ENCODE measurements at regions of chr10 and their contacts with region 1.

Region 1: GRCh38 chr10:73886085-73886529 is 11.8 kb upstream of the CAMK2G start:
- DNase-seq: no peak
- H3K4me3 ChIP-seq: no peak overlapping the region
- H3K27me3 ChIP-seq: no peaks in the 10 kb centered on the region
- CTCF ChIP-seq: peak; percentile 89

Region 2: DNA sequence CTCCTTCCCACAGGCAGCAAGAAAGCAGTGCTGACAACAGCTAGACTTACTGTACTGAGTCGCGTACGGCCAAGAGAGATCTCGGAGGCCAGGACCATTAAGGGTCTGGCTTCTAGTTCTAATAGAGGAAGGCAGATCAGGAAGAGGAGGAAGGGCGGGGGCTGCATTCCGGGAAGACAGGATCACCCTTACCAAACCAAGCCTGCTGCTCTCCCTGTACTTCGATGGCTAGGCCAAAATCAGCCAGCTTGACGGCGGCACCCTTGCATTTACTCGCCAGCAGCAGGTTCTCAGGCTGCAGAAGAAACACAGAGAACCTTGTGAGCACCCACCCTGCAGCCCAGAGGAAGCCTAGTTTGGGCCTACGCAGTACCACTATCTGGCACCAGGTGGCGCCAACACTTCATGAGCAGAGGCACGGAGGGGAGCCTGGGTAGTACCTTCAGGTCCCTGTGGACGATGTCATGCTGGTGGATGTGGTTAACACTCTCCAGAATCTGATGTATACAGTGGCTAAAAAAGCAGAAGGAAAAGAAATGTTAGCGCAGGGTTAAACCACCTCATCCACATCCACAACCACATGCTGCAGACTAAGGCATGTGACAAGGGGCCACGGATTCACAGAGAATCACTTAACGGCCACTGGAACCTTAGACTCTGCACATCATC is 37.2 kb before region 1 on chr10:
- CTCF ChIA-PET with region 1: interaction called, 337 read pairs
- POLR2A ChIA-PET with region 1: interaction called, 3 read pairs
- DNase-seq: no peak
- H3K4me3 ChIP-seq: no peak overlapping the region
- H3K27me3 ChIP-seq: no peaks in the 10 kb centered on the region
- CTCF ChIP-seq: peak; percentile 99

Region 3: DNA sequence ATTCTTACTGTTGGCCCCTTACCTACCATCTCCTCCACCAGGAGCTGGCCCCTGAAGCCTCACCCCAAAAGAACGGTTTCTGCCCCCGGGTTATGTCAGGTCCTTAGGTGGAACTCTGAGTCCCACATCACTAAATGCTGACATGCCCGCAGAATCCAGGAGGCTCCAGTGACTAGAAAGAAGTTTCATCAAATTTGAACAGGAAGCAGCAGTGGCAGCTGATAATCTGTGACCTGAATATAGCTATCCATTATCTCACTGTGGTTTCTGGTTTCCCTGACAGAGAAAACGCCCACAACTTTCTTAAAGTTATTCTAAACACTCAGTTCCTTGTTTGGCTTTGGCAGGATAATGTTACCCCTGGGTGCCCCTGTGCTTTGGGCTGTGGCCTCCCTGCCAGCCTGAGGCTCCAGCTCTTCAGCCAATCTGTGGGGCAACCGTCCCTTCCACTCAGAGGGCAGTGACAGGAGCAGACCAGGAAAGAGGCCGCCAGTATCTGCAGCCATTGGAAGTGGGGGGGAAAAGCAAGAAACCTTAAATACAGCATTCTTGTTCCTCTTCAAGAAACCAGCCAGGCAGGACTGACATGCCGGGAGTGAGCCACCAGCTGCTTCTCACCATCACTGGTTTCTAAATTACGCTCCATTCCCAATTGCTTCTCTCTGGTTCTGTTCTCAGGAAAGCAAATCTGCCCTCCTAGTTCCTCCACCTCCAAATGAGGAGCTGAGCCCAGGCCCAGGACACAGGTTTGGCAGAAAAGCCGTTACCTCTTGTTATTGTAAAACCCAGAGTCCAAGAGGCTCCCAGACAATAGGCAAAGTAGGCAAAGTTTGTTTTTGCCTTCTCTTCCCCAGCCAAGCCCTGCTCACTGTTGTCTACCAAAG is 70.6 kb after region 1 on chr10:
- CTCF ChIA-PET with region 1: interaction called, 16 read pairs
- POLR2A ChIA-PET with region 1: no interaction called
- DNase-seq: no peak
- H3K4me3 ChIP-seq: no peak overlapping the region
- H3K27me3 ChIP-seq: no peaks in the 10 kb centered on the region
- CTCF ChIP-seq: no peak

Region 4: GRCh38 chr10:74081192-74081803 is 195.2 kb after region 1 on chr10:
- CTCF ChIA-PET with region 1: interaction called, 44 read pairs
- POLR2A ChIA-PET with region 1: no interaction called
- DNase-seq: no peak
- H3K4me3 ChIP-seq: no peak overlapping the region
- H3K27me3 ChIP-seq: no peaks in the 10 kb centered on the region
- CTCF ChIP-seq: peak; percentile 84

Region 5: GRCh38 chr10:74103560-74104248 is 217.6 kb after region 1 on chr10:
- CTCF ChIA-PET with region 1: interaction called, 11 read pairs
- POLR2A ChIA-PET with region 1: no interaction called
- DNase-seq: no peak
- H3K4me3 ChIP-seq: no peak overlapping the region
- H3K27me3 ChIP-seq: no peaks in the 10 kb centered on the region
- CTCF ChIP-seq: peak; percentile 51